ENCODE measurements at regions of chr6 and their contacts with region 1.

Region 1: DNA sequence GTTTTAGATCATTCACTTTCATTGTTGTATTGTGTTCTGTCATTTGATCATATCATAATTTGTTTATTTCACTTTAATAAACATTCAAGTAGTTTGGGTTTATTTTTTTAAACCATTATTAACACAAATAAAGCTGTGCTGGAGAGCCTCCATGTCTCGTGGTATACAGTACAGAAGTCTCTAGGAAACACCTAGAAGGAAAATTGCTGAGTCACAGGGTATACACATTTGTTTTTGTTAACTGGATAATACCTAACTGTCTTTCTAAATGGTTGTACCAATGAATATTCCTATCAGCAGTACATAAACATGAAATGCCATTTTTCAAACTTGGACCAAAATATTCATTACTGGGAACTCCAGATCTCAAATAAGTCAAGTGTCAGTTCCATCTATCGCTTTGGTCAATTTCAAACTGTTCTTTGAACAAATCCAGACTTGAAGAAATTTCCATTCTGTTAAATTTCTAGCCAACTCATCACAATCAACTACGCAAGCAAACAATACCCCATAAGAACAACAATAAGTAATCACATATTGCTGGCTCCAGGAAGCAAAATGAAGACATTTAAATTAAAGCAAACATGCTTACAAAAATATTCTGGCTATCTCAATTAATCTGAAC is 138.1 kb downstream of the ATXN1 start:
- DNase-seq: no peak
- ATAC-seq: no peak
- H3K4me3 Mint-ChIP-seq: no peak overlapping the region
- H3K27ac Mint-ChIP-seq: peak overlapping the region; percentile 9
- H3K4me1 Mint-ChIP-seq: peaks cover 50% of the 10 kb centered on the region
- H3K27me3 Mint-ChIP-seq: no peaks in the 10 kb centered on the region

Region 2: DNA sequence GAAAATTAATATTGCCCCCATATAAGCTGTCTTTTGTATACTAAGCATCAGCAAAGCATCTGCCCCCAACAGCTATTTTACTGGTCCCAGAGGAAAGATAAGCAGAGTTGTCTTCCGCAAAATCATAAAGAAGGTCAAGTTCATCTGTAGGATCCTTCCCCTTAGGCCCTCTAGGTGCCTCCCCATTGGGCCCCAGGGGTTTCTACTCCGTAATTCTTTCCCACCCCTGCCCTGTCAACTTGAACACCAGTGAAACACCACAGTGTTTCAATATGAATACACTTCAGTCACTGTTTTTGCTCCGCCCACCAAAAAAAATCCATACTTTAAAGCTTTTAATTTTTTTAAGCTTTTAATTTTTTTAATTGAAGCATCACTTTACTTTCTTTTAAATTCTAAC is 21.1 kb before region 1 on chr6:
- CTCF ChIA-PET with region 1: no interaction called
- DNase-seq: peak; percentile 74
- ATAC-seq: peak; percentile 97
- H3K4me3 Mint-ChIP-seq: no peak overlapping the region
- H3K27ac Mint-ChIP-seq: peak overlapping the region; percentile 61
- H3K4me1 Mint-ChIP-seq: peaks cover 48% of the 10 kb centered on the region
- H3K27me3 Mint-ChIP-seq: no peaks in the 10 kb centered on the region

Region 3: GRCh38 chr6:16635810-16636602 is 12.9 kb after region 1 on chr6:
- CTCF ChIA-PET with region 1: interaction called, 10 read pairs
- DNase-seq: no peak
- ATAC-seq: no peak
- H3K4me3 Mint-ChIP-seq: no peak overlapping the region
- H3K27ac Mint-ChIP-seq: peak overlapping the region; percentile 61
- H3K4me1 Mint-ChIP-seq: peaks cover 53% of the 10 kb centered on the region
- H3K27me3 Mint-ChIP-seq: no peaks in the 10 kb centered on the region

Measured in activated CD8-positive, alpha-beta memory T cell treated with anti-CD3 and anti-CD28 coated beads, Interleukin-2, amount 10 ng/mL, durations not matched to agents 7 days and 5 days (primary cell).